ENCODE measurements at regions of chr13 and their contacts with region 1.

Region 1: DNA sequence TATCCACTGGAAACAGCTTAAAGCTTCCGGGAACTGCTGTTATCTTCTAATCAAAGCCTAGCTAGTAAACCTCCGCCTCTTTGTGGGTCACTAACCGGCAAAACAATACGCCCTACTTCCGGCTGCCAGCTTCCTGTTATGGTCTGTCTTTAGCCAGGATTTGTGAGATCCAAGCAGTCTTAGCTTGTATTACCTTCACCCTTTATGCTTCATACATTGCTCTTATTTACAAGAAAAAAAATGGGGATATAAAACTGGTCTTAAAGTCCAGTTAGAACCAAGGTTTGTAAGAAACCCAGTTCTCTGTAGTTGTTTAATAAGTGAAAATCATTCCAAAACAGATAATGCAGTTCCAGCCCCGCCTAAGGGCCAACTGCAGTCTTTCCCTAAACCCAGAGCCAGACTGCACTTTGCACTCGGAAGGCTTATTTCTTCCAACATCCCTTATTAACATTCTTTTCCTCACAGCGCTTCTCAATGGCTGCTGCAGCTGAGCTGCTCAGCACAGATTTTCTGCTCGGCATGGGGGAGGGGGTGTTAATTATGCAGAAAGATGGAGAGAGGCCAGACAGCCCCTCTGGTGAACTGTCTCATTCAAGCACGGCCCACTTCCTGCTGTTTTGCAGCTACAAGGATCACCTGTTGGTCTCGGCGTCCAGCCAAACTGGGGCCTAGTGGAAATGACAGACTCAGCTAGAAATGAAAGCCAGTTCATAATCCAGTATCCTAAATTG is 368.4 kb downstream of the KLF12 start:
- DNase-seq: peak; percentile 59
- H3K4me3 ChIP-seq: peak overlapping the region in 1 of 2 experiments; percentile 10; a peak in 2 of 4 replicates
- H3K27ac ChIP-seq: peak overlapping the region; percentile 3 to 99; a peak in 3 of 4 replicates
- H3K4me1 ChIP-seq: peaks cover 17 to 30% of the 10 kb centered on the region in 2 experiments; a peak in 3 of 4 replicates
- H3K27me3 ChIP-seq: no peaks in the 10 kb centered on the region
- CTCF ChIP-seq: no peak
- EP300 ChIP-seq: peak in 1 of 2 experiments; percentile 68; a peak in 2 of 4 replicates
- RAD21 ChIP-seq: peak; percentile 29; the same call in 1 of the 2 replicates

Region 2: DNA sequence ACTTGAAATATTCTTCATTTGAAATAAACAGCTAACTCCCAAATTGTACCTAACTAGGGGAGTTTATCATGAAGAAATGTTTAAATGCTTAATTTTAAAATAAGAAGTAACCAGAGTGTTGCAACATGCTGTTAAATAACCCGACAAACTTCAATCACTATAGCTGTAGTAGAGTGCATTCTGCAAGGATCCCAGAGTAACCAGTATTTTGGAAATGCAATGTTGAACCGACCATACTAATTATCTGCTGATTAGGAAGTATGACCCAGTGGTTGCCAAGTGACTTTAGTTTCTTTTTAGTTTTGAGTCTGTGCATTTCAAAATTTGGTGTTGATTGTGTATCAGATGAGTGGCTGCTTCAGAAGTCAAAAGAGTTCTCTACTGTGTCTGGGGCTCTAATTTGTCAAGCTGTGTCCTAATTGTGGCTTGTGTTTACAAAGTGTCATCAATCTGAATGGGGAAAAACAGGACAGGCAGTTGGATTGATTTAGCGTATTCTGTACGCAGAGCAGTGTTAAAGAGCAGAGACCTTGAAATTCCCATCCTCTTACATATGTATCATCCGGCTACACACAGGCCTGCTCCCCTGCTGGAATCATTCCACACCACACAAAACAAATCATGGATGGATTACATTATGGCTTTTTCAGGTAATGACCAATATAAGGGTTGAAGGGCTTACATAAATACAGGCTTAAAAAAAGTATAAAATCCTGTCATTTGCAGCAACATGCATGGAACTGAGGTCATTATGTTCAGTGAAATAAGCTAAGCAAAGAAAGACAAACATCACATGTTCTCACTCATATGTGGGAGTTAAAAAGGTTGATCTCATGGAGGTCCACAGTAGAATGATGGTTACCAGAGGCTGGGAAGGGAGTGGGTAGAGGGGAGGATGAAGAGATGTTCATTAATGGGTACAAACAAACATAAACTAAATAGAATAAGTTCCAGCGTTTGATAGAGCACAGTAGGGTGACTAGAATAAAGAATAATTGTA is 16.9 kb after region 1 on chr13:
- CTCF ChIA-PET with region 1: interaction called, 12 read pairs
- POLR2A ChIA-PET with region 1: no interaction called
- DNase-seq: peak; percentile 14
- H3K4me3 ChIP-seq: no peak overlapping the region
- H3K27ac ChIP-seq: peak overlapping the region in 1 of 2 experiments; percentile 35; a peak in 2 of 4 replicates
- H3K4me1 ChIP-seq: peaks cover 0 to 18% of the 10 kb centered on the region in 2 experiments; a peak in 2 of 4 replicates
- H3K27me3 ChIP-seq: no peaks in the 10 kb centered on the region
- CTCF ChIP-seq: no peak
- EP300 ChIP-seq: no peak
- RAD21 ChIP-seq: no peak

Region 3: DNA sequence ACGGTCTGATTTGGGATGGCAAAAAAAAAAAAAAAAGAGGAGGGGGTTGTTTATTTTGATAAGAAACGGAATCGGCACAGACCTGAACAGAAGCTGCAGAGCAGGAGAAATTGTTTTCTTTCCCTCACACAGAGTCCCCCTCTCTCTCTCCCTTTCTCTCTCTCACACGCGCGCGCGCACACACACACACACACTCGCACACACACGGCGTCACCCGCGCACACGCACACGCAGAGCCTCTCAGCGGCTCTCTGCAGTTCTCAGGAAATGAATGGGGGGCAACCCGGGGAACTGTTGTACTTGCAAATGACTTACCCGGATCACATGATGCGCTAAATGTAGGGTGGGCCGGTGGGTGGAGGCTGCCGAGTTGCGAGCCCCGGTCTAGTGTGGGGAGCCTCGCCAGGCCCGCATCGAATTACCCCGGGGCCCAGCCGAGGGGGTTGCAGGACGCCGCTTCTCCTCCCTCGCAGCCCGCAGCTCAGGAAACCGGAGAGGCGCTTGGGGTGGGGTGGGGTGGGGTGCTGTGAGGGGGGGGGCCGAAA is 367.9 kb after region 1 on chr13:
- CTCF ChIA-PET with region 1: interaction called, 4 read pairs
- POLR2A ChIA-PET with region 1: interaction called, 12 read pairs
- DNase-seq: peak; percentile 85
- H3K4me3 ChIP-seq: peak overlapping the region; percentile 79 to 88
- H3K27ac ChIP-seq: peak overlapping the region; percentile 92 to 98
- H3K4me1 ChIP-seq: peaks cover 15 to 17% of the 10 kb centered on the region in 2 experiments; a peak in 3 of 4 replicates
- H3K27me3 ChIP-seq: no peaks in the 10 kb centered on the region
- CTCF ChIP-seq: no peak
- EP300 ChIP-seq: no peak; a peak in 1 of 4 replicates
- RAD21 ChIP-seq: peak; percentile 23; the same call in 1 of the 2 replicates

Measured in SK-N-SH (cell line).